ENCODE measurements at regions of chr16 and their contacts with region 1.

Region 1: DNA sequence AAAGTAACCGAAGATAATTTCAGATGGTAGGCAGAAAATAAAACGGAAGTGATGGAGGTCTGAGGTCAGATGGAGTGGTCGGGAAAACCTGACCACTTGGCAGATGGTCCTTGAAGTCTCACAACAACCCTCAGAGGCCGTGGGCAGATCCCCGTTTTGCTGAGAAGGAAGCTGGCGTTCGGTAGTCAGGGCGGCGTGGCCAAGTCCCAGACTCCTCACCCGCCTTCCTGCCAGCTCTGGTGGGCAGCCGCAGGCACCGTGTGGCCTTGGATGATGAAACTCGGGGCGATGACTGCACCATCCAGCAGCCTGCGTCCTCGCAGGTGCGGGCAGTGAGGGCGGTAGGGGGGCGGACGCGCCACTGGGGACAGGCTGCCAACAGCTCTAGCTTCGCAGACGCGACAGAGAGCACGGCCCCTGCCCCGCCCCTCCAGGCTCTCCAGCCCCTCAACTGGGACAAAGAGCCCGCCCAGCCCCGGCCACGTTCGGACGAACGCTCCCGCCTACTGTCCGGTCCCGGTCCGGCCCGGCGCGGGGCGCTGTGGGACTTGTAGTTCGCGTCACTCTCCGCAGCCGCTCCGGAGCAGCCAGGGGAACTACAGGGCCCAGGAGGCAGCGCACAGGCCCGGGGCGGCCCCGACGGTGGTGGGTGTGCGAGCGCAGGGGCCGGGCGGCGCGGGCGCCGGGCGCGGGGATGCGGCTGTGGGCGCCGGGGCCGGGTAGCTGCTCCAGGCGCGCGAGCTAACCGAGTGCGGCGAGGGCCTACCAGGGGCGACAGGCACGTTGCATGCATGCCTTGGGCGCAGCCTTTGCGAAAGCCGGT is at the start of gene GPT2:
- DNase-seq: peak; percentile 97
- H3K4me3 ChIP-seq: peak within 1 kb of the TSS; percentile 18 to 72 (median 62)
- H3K27ac ChIP-seq: no peak within 1 kb of the TSS
- H3K4me1 ChIP-seq: peaks cover 3% of the 10 kb centered on the region
- H3K27me3 ChIP-seq: peaks cover 6 to 15% of the 10 kb centered on the region in 2 experiments
- CTCF ChIP-seq: no peak
- POLR2A ChIP-seq: peak; percentile 38
- total RNA-seq, gene GPT2: 16.1 and 17.9 TPM in 2 replicates

Region 2: DNA sequence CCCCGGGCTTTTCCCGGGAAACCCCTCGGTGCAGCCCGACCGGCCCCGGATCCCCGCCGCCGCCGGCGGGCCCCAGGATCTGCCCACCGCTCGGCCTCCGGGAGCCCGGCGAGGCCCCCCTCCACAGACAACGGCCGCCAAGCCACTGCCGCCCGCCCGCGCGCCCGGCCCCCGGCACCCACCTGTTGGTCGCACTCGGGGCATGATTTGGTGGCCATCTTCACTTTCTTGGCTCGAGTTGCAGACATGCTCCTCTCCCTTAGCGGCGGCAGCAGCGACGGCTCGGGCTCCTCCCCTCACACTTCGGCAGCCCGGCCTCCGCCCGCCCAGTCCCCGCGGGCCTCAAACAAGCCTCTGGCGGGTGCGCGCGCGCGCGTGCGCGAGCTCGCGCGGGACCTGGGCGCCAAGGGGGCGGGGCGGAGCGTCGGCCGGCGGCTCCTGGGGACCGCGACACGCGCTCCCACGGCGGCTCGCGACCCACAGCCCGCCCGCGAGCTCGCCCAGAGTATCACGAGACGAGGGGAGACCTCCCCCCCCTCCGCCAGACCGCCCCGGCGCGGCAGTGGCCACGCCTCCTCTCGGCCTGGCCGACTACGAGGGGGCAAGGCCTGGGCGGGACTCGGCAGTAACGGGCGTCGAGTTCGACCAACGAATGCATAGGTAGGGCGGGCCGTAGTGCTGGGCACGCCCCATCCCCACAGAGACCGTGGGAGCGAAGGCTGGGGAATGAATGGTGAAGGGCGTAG is 52.8 kb before region 1 on chr16 and contains the start of gene C16orf87:
- CTCF ChIA-PET with region 1: no interaction called
- POLR2A ChIA-PET with region 1: no interaction called
- dilution Hi-C with region 1: no loop called
- intact Hi-C with region 1: no loop called
- DNase-seq: peak; percentile 93
- H3K4me3 ChIP-seq: peak within 1 kb of the TSS; percentile 74 to 91 (median 82)
- H3K27ac ChIP-seq: peak within 1 kb of the TSS; percentile 50
- H3K4me1 ChIP-seq: peaks cover 24% of the 10 kb centered on the region
- H3K27me3 ChIP-seq: peaks cover 8 to 13% of the 10 kb centered on the region in 2 experiments
- CTCF ChIP-seq: no peak
- POLR2A ChIP-seq: peak; percentile 43
- total RNA-seq, gene C16orf87: 8.5 and 11.1 TPM in 2 replicates

Region 3: GRCh38 chr16:46859719-46860152 is 24.2 kb before region 1 on chr16:
- CTCF ChIA-PET with region 1: interaction called, 36 read pairs
- POLR2A ChIA-PET with region 1: interaction called, 4 read pairs
- dilution Hi-C with region 1: no loop called
- intact Hi-C with region 1: loop called (anchors 1 kb)
- DNase-seq: peak; percentile 73
- H3K4me3 ChIP-seq: no peak overlapping the region
- H3K27ac ChIP-seq: peak overlapping the region; percentile 9
- H3K4me1 ChIP-seq: peaks cover 8% of the 10 kb centered on the region
- H3K27me3 ChIP-seq: no peaks in the 10 kb centered on the region
- CTCF ChIP-seq: no peak
- POLR2A ChIP-seq: no peak

Region 4: DNA sequence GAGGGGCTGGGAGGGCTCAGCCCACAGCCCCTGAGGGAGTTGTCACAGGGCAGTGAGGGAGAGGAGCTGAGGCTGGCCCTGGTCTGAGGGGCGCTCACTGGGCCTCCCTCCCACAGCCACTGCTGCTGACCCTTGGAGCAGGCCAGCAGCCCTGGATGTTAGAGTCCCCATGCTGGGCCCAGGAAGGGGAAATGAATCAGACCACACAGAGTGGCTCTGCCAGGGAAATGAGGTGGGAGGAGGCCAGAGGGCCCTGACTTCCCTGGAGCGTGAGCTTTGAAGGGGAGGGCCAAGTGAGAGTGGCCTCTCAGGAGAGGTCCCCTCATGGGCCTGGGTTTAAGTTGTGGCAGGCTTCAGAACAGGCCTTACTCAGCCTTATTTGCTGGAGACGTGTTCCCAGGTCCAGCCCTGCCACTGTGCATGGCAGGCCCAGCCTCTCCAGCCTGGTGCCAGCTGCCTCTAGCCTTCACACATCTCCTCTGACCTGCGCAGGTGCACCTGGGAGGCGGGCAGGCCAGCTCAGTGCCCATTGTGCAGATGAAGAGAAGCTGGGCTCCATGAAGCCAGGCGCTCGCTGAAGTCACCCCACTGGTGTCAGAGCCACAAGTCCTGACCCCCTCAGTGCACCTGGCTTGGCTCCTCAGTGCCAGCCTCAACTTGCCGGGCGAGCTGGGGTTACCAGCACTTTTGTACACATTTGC is 15.7 kb after region 1 on chr16:
- CTCF ChIA-PET with region 1: interaction called, 3 read pairs
- POLR2A ChIA-PET with region 1: no interaction called
- dilution Hi-C with region 1: no loop called
- intact Hi-C with region 1: loop called (anchors 1 kb)
- DNase-seq: no peak
- H3K4me3 ChIP-seq: no peak overlapping the region
- H3K27ac ChIP-seq: no peak overlapping the region
- H3K4me1 ChIP-seq: no peaks in the 10 kb centered on the region
- H3K27me3 ChIP-seq: no peaks in the 10 kb centered on the region
- CTCF ChIP-seq: no peak
- POLR2A ChIP-seq: no peak

Region 5: GRCh38 chr16:46908540-46909372 is 24.9 kb after region 1 on chr16:
- CTCF ChIA-PET with region 1: interaction called, 25 read pairs
- POLR2A ChIA-PET with region 1: no interaction called
- dilution Hi-C with region 1: no loop called
- intact Hi-C with region 1: loop called (anchors 1 kb)
- DNase-seq: peak; percentile 66
- H3K4me3 ChIP-seq: no peak overlapping the region
- H3K27ac ChIP-seq: no peak overlapping the region
- H3K4me1 ChIP-seq: no peaks in the 10 kb centered on the region
- H3K27me3 ChIP-seq: no peaks in the 10 kb centered on the region
- CTCF ChIP-seq: peak; percentile 42 to 61
- POLR2A ChIP-seq: no peak

Region 6: DNA sequence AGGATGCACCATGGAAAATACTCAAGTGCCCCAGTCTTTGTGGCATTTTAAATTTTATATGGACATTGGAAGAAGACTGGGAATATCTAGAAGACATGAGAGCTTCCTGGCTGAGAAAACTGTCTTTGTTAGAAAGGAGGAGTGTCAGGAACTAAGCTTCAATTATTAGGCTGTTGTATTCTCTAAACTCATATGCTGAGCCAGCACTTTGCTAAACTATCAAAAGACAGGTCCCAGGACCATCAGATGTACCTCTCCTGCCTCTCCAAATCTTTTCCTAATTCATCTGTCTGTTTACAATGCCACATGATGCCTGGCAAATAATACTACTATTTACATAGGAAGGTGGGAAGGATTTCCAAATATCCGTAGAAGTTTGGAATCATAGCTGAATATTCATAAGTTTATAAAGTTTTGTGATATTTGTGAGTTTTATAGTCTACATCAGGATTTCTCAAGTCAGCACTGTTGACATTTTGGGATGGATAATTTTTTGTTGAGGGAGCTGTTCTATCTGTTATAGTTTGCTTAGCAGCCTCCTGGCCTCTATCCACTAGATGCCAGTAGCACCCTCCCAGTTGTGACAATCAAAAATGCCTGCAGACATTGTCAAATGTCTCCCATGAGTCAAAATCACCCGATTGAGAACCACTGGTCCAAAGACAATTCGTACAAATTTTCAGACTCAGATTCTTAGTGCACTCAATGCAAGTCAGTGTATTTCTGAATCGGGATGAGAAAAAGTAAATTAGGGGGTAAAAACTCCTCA is 321.0 kb after region 1 on chr16:
- CTCF ChIA-PET with region 1: no interaction called
- POLR2A ChIA-PET with region 1: no interaction called
- dilution Hi-C with region 1: no loop called
- intact Hi-C with region 1: no loop called
- DNase-seq: no peak
- H3K4me3 ChIP-seq: no peak overlapping the region
- H3K27ac ChIP-seq: no peak overlapping the region
- H3K4me1 ChIP-seq: no peaks in the 10 kb centered on the region
- H3K27me3 ChIP-seq: no peaks in the 10 kb centered on the region
- CTCF ChIP-seq: no peak
- POLR2A ChIP-seq: no peak

Measured in endothelial cell of umbilical vein (primary cell).